PC-3 (cell line): ENCODE measurements at regions of chr7 and their contacts with region 1.

Region 1: DNA sequence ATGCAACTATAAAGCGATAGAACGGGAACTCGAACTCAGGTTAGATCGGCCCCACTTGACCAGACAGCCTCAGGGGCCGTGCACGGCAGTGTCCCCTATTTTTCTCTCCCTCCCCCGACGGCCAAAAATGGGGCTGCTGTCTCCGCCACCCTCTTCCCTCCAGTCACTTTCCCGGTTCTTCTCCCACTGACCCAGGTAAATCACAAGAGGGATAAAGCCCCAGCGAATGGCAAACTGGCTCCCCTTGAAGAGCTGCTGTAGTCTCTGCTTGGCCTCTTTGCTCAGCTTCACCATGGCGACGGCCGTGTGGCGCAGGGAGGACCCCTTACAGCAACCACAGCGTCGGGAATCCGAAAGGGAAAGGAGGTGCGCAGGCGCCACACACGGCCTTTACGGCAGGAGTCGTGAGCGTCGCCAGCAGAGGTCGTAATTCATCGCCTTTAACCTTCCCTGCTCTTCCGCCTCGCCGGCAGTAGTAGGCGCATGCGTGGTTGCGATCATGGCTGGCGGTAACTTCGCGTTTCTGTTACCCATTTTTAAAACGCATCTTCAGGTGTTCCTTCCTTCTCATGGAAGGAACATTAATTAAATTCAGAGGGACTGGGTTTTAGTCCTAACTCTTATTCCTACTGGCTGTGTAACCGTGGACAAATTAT is at the start of gene TOMM7:
- DNase-seq: peak; percentile 96
- ATAC-seq: peak; percentile 78
- H3K4me3 ChIP-seq: peak within 1 kb of the TSS; percentile 89
- H3K27ac ChIP-seq: peak within 1 kb of the TSS; percentile 42
- H3K4me1 ChIP-seq: peaks cover 31% of the 10 kb centered on the region
- H3K27me3 ChIP-seq: no peaks in the 10 kb centered on the region
- CTCF ChIP-seq: no peak
- total RNA-seq, gene TOMM7: 132 and 151 TPM in 2 replicates

Region 2: DNA sequence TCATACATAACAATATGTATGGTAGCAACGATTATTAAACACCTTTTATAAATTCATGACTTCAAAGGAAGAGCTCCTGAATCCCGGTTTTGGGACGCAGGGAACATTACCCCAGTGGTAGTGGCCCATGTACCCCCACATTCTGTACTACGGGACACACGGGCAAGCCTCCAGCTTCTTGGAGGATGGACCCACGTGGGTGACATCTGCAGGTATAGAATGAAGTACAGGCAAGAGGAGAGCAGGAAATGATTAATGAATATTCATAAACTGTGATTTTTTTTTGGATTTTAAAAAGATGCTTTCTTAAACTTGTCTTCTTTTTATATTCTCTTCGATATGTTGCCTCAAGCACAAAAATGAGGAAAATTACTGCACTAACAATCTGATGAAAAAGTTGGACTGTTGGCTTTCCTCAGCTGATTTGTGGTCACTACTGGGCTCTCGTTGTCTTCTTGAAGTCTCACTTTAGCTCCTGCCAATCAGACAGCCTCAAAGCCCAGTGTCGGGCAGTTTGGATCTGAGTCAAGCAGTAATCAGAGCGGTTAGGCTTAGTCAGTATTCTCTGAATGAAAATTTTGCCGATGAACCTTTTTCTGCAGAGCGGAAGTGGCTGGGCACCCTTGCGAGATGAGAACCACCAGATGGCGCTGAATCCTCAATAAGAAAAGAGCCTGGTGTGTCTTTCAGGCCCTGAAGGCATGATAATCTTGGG is 719.2 kb before region 1 on chr7:
- CTCF ChIA-PET with region 1: no interaction called
- POLR2A ChIA-PET with region 1: no interaction called
- intact Hi-C with region 1: no loop called
- DNase-seq: peak; percentile 94
- ATAC-seq: peak; percentile 100
- H3K4me3 ChIP-seq: peak overlapping the region; percentile 39; the same call in 1 of the 2 replicates
- H3K27ac ChIP-seq: no peak overlapping the region
- H3K4me1 ChIP-seq: peaks cover 6% of the 10 kb centered on the region
- H3K27me3 ChIP-seq: no peaks in the 10 kb centered on the region
- CTCF ChIP-seq: peak; percentile 85

Region 3: DNA sequence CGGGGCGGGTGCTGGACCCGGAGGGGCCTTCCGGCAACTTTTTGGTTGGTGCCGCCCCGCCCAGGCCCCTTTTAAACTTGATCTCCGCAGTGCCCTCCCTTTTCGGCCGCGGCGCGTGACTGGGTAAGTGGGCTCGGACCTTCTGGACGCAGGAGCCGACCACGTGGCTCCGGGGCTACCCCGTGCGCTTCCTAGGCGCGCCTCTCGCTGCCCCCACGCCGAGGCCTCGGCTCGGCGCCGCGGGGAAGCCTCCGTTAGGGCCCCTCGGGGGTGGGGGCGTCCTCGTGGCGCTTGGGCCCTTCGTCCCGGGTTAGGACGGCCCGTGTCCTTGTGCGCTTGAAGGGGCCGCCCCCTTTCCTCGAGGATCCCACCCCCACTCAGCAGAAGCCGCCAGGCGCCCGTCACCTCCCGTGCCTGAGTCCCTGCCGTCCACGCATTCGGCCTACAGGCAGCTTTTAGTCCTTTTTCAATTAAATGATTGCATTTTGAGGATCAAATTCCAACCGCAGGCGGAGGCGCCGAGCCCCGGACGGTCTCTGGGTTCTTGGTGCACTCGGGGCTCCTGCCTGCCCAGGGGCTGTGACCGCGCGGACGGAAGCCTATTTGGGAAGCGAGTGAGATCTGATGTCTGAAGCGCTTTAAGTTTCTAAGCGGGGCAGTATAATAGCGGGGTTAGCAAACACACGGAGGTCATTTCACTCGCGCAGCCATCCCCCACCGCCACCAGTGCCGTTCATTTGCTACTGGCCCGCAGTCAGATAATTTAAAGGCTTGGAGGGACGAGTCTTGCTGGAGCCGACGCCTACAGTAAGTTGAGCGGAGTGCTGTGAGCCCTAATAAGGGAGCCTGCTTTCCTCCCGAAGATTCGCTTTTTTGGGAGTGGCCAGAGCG is 31.8 kb after region 1 on chr7:
- CTCF ChIA-PET with region 1: no interaction called
- POLR2A ChIA-PET with region 1: no interaction called
- intact Hi-C with region 1: loop called (anchors 1 kb)
- DNase-seq: peak; percentile 86
- ATAC-seq: peak; percentile 72
- H3K4me3 ChIP-seq: peak overlapping the region; percentile 87
- H3K27ac ChIP-seq: peak overlapping the region; percentile 79
- H3K4me1 ChIP-seq: peaks cover 38% of the 10 kb centered on the region
- H3K27me3 ChIP-seq: no peaks in the 10 kb centered on the region
- CTCF ChIP-seq: no peak

Region 4: GRCh38 chr7:23181684-23182553 is 359.3 kb after region 1 on chr7 and contains the start of gene NUP42:
- CTCF ChIA-PET with region 1: no interaction called
- POLR2A ChIA-PET with region 1: no interaction called
- intact Hi-C with region 1: loop called (anchors 5 kb)
- DNase-seq: peak; percentile 99
- ATAC-seq: peak; percentile 91
- H3K4me3 ChIP-seq: peak within 1 kb of the TSS; percentile 88
- H3K27ac ChIP-seq: peak within 1 kb of the TSS; percentile 56
- H3K4me1 ChIP-seq: peaks cover 27% of the 10 kb centered on the region
- H3K27me3 ChIP-seq: no peaks in the 10 kb centered on the region
- CTCF ChIP-seq: no peak
- total RNA-seq, gene NUP42: 30.1 and 48.6 TPM in 2 replicates

Region 5: GRCh38 chr7:24152356-24152755 is 1329.7 kb after region 1 on chr7:
- CTCF ChIA-PET with region 1: no interaction called
- POLR2A ChIA-PET with region 1: interaction called, 20 read pairs
- intact Hi-C with region 1: no loop called
- DNase-seq: peak; percentile 59
- ATAC-seq: no peak
- H3K4me3 ChIP-seq: no peak overlapping the region
- H3K27ac ChIP-seq: no peak overlapping the region
- H3K4me1 ChIP-seq: no peaks in the 10 kb centered on the region
- H3K27me3 ChIP-seq: no peaks in the 10 kb centered on the region
- CTCF ChIP-seq: no peak